Activated CD4-positive, alpha-beta memory T cell treated with anti-CD3 and anti-CD28 coated beads for 36 hours (primary cell): ENCODE measurements at regions of chr10 and their contacts with region 1.

Region 1: GRCh38 chr10:88091490-88092105 is 228.2 kb downstream of the PTEN start:
- DNase-seq: peak; percentile 88
- H3K4me3 Mint-ChIP-seq: no peak overlapping the region
- H3K27ac Mint-ChIP-seq: peak overlapping the region; percentile 36
- H3K4me1 Mint-ChIP-seq: peaks cover 36% of the 10 kb centered on the region
- H3K27me3 Mint-ChIP-seq: peaks cover 17% of the 10 kb centered on the region

Region 2: GRCh38 chr10:87829986-87830729 is 261.4 kb before region 1 on chr10:
- CTCF ChIA-PET with region 1: no interaction called
- POLR2A ChIA-PET with region 1: interaction called, 4 read pairs
- intact Hi-C with region 1: loop called (anchors 1 kb)
- DNase-seq: no peak
- H3K4me3 Mint-ChIP-seq: no peak overlapping the region
- H3K27ac Mint-ChIP-seq: no peak overlapping the region
- H3K4me1 Mint-ChIP-seq: peaks cover 38% of the 10 kb centered on the region
- H3K27me3 Mint-ChIP-seq: peaks cover 2% of the 10 kb centered on the region

Region 3: DNA sequence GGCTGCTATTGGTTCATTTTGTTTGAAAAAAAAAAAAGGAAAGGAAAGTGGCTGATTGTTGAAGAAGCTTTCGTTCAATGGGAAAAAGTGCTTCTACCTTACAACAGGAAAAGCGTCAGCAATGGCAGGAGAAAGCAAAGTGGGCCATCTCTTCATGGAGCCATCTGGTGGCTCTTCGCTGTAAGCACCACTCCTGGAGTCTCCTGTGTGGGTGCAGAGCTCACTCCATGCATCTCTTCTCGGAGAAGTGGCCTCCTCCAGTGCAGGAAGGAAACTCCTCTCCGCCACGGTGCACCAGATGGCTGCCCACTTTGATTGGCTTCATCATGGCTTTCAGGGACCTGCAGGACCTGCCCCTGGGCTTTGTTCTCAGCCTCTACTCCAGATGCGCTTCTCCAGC is 22.8 kb after region 1 on chr10:
- CTCF ChIA-PET with region 1: interaction called, 14 read pairs
- POLR2A ChIA-PET with region 1: interaction called, 20 read pairs
- intact Hi-C with region 1: loop called (anchors 1 kb)
- DNase-seq: peak; percentile 25
- H3K4me3 Mint-ChIP-seq: no peak overlapping the region
- H3K27ac Mint-ChIP-seq: no peak overlapping the region
- H3K4me1 Mint-ChIP-seq: peaks cover 6% of the 10 kb centered on the region
- H3K27me3 Mint-ChIP-seq: peaks cover 2% of the 10 kb centered on the region

Region 4: GRCh38 chr10:88152720-88153119 is 61.1 kb after region 1 on chr10:
- CTCF ChIA-PET with region 1: no interaction called
- POLR2A ChIA-PET with region 1: interaction called, 7 read pairs
- intact Hi-C with region 1: loop called (anchors 1 kb)
- DNase-seq: peak; percentile 77
- H3K4me3 Mint-ChIP-seq: no peak overlapping the region
- H3K27ac Mint-ChIP-seq: peak overlapping the region; percentile 89
- H3K4me1 Mint-ChIP-seq: peaks cover 22% of the 10 kb centered on the region
- H3K27me3 Mint-ChIP-seq: no peaks in the 10 kb centered on the region

Region 5: DNA sequence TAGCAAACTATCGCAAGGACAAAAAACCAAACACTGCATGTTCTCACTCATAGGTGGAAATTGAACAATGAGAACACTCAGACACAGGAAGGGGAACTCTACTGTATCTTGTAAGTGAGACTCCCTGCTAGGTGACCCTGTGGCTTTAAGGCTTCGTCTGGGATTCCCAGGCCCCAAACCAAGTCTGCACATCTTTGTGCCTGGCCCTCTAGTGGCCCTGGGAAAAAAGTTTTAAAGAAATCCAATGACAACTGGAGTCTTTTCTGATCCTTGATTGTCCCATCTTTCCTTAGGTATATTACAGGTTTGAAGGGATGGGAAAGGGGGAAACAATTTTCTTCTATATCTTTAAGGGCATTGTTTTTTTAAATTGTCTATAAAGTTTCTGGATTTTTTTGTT is 700.3 kb after region 1 on chr10:
- CTCF ChIA-PET with region 1: no interaction called
- POLR2A ChIA-PET with region 1: no interaction called
- intact Hi-C with region 1: loop called (anchors 5 kb)
- DNase-seq: peak; percentile 15
- H3K4me3 Mint-ChIP-seq: no peak overlapping the region
- H3K27ac Mint-ChIP-seq: no peak overlapping the region
- H3K4me1 Mint-ChIP-seq: peaks cover 18% of the 10 kb centered on the region
- H3K27me3 Mint-ChIP-seq: peaks cover 7% of the 10 kb centered on the region